A549 (cell line): ENCODE measurements at regions of chr9 and their contacts with region 1.

Region 1: GRCh38 chr9:105157130-105157583 is 87.3 kb upstream of the SLC44A1 start:
- DNase-seq: peak; percentile 78 to 80
- ATAC-seq: peak; percentile 93 to 95
- H3K4me3 ChIP-seq: no peak overlapping the region
- H3K27ac ChIP-seq: peak overlapping the region; percentile 38 to 74; a peak in 5 of 6 replicates
- H3K4me1 ChIP-seq: peaks cover 36% of the 10 kb centered on the region
- CTCF ChIP-seq: peak; percentile 75
- EP300 ChIP-seq: no peak
- POLR2A ChIP-seq: no peak
- RAD21 ChIP-seq: peak; percentile 85 to 93

Region 2: GRCh38 chr9:104863180-104863883 is 293.8 kb before region 1 on chr9:
- CTCF ChIA-PET with region 1: interaction called, 39 read pairs
- POLR2A ChIA-PET with region 1: no interaction called
- DNase-seq: peak; percentile 68 to 75
- ATAC-seq: peak; percentile 84 to 94
- H3K4me3 ChIP-seq: no peak overlapping the region
- H3K27ac ChIP-seq: peak overlapping the region; percentile 28 to 53; a peak in 5 of 6 replicates
- H3K4me1 ChIP-seq: peaks cover 27% of the 10 kb centered on the region
- CTCF ChIP-seq: peak; percentile 80
- EP300 ChIP-seq: no peak
- POLR2A ChIP-seq: no peak
- RAD21 ChIP-seq: peak; percentile 84 to 89

Region 3: DNA sequence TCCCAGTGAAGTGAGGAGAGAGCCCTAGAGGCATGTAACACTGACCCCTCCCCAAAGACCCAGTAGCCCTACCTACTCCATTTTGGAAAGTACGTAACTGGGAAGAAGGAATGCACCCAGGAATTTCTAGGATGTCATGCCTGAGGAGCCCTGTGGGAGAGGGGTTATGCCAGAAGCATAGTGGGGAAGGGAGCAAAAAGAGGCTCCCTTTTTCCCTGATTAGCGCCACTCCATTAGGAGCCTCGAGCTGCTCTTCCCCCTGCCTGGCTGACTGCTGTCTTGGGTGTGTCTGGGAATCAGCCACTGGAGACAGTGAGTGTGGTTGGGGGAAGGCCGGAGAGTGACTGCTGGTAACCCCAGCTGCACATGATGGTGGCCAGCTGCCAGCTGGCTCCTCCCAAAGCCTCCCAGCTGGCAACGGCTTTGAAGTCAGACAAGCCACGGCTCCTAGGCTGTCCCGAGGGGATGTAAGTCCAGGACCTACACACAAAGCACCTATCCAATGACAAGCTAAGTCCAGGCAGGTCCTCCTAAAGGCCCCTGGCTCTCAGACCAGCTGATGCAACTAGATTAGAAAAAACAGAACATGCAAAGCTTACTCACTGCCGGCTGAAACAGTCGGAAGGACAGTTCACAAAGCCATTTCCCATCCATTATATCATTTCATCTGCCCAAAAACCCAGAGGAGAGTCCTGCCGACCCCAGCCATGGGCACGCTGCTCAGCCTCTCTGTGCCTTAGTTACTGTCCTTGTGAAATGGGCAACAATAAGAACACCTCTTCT is 92.7 kb before region 1 on chr9:
- CTCF ChIA-PET with region 1: interaction called, 11 read pairs
- POLR2A ChIA-PET with region 1: no interaction called
- DNase-seq: peak; percentile 89 to 96
- ATAC-seq: peak; percentile 90 to 95
- H3K4me3 ChIP-seq: peak overlapping the region; percentile 12; the same call in 1 of the 3 replicates
- H3K27ac ChIP-seq: peak overlapping the region; percentile 88 to 93
- H3K4me1 ChIP-seq: peaks cover 41% of the 10 kb centered on the region
- CTCF ChIP-seq: no peak
- EP300 ChIP-seq: peak; percentile 81 to 87; a peak in 4 of 5 replicates
- POLR2A ChIP-seq: no peak
- RAD21 ChIP-seq: peak in 1 of 2 experiments; percentile 66; a peak in 3 of 5 replicates

Region 4: GRCh38 chr9:105173306-105173705 is 16.1 kb after region 1 on chr9:
- CTCF ChIA-PET with region 1: interaction called, 34 read pairs
- POLR2A ChIA-PET with region 1: no interaction called
- DNase-seq: no peak
- ATAC-seq: no peak
- H3K4me3 ChIP-seq: no peak overlapping the region
- H3K27ac ChIP-seq: no peak overlapping the region
- H3K4me1 ChIP-seq: no peaks in the 10 kb centered on the region
- CTCF ChIP-seq: no peak
- EP300 ChIP-seq: no peak
- POLR2A ChIP-seq: no peak
- RAD21 ChIP-seq: no peak

Region 5: DNA sequence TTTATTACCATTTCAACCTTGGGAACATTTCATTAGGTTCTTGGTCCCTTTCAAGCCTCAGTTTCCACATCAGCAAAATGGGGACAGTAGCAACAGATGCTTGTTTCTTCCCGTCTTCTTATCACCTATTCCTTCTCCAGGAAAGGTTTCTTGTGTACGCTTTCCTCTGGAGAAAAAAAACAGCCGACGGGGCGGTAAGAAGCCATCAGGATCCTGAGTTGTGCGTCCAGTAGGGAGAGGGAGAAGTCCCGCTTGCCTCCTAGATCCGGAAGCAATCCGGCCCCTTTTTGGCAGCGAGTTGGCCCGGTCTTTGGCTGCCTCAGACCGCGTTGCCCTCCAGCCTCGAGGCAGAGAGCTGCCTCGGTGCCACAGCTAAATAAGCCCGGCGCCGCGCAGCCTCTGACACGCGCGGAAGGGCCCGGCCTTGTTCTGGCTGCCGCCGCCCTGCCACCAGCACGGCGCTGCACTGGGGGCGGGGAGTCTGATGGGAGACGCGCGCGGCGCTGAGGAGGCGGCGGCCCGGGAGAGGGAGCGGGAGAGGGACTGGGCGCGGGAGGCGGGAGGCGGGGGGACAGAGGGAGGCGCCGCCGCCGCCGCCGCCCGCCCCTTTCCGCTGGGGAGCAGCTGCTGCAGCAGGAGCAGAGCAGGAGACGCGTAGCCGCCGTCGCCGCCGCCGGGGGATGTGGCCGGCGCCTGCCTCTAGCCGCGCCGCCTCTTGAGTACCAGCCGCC is 87.0 kb after region 1 on chr9 and contains the start of gene SLC44A1:
- CTCF ChIA-PET with region 1: interaction called, 21 read pairs
- POLR2A ChIA-PET with region 1: interaction called, 9 read pairs
- DNase-seq: peak; percentile 69 to 96
- ATAC-seq: peak; percentile 94 to 98
- H3K4me3 ChIP-seq: peak within 1 kb of the TSS; percentile 97
- H3K27ac ChIP-seq: peak within 1 kb of the TSS; percentile 93 to 95
- H3K4me1 ChIP-seq: peaks cover 35% of the 10 kb centered on the region
- CTCF ChIP-seq: no peak; the same call in 2 of the 3 replicates
- EP300 ChIP-seq: 0 out of 5 replicates have a peak, but pooled peaks of 1 of the 2 experiments have one; percentile 31
- POLR2A ChIP-seq: peak; percentile 56
- RAD21 ChIP-seq: peak; percentile 23 to 49; a peak in 2 of 5 replicates
- polyA plus RNA-seq, gene SLC44A1: 19.6 and 38.8 TPM in 2 replicates

Region 6: GRCh38 chr9:105405514-105406131 is 248.5 kb after region 1 on chr9:
- CTCF ChIA-PET with region 1: interaction called, 185 read pairs
- POLR2A ChIA-PET with region 1: no interaction called
- DNase-seq: no peak
- ATAC-seq: no peak
- H3K4me3 ChIP-seq: no peak overlapping the region
- H3K27ac ChIP-seq: no peak overlapping the region
- H3K4me1 ChIP-seq: no peaks in the 10 kb centered on the region
- CTCF ChIP-seq: no peak
- EP300 ChIP-seq: no peak
- POLR2A ChIP-seq: no peak
- RAD21 ChIP-seq: no peak